ENCODE measurements at regions of chr3 and their contacts with region 1.

Region 1: GRCh38 chr3:190701096-190701532 is 161.4 kb downstream of the GMNC start:
- DNase-seq: peak; percentile 87
- H3K4me3 ChIP-seq: no peak overlapping the region
- H3K27ac ChIP-seq: peak overlapping the region; percentile 11
- H3K4me1 ChIP-seq: peaks cover 45% of the 10 kb centered on the region
- H3K27me3 ChIP-seq: no peaks in the 10 kb centered on the region
- CTCF ChIP-seq: peak; percentile 88

Region 2: DNA sequence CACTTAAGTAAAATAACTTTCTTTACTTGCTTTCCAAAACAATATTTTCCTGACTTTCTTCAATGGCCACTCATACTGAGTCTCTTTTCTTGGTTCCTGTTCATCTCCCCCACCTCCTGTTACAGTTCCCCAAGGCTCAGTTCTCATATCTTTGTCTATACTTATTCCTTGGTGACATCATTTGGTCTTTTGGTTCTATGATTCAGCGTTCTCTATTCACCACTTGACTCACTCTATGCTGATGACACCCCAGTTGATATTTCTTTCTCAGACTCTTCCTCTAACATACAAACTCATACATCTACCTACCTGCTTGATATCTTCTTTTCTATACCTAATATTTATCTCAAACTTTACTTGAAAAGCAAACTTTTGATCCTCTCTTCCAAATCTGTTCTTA is 495.4 kb before region 1 on chr3:
- CTCF ChIA-PET with region 1: no interaction called
- POLR2A ChIA-PET with region 1: no interaction called
- intact Hi-C with region 1: loop called (anchors 10 kb)
- DNase-seq: no peak
- H3K4me3 ChIP-seq: no peak overlapping the region
- H3K27ac ChIP-seq: no peak overlapping the region
- H3K4me1 ChIP-seq: no peaks in the 10 kb centered on the region
- H3K27me3 ChIP-seq: no peaks in the 10 kb centered on the region
- CTCF ChIP-seq: no peak

Region 3: GRCh38 chr3:190526787-190527762 is 174.0 kb before region 1 on chr3:
- CTCF ChIA-PET with region 1: interaction called, 5 read pairs
- POLR2A ChIA-PET with region 1: no interaction called
- intact Hi-C with region 1: loop called (anchors 1 kb)
- DNase-seq: peak; percentile 68
- H3K4me3 ChIP-seq: peak overlapping the region; percentile 16
- H3K27ac ChIP-seq: peak overlapping the region; percentile 83
- H3K4me1 ChIP-seq: peaks cover 88% of the 10 kb centered on the region
- H3K27me3 ChIP-seq: no peaks in the 10 kb centered on the region
- CTCF ChIP-seq: no peak

Region 4: DNA sequence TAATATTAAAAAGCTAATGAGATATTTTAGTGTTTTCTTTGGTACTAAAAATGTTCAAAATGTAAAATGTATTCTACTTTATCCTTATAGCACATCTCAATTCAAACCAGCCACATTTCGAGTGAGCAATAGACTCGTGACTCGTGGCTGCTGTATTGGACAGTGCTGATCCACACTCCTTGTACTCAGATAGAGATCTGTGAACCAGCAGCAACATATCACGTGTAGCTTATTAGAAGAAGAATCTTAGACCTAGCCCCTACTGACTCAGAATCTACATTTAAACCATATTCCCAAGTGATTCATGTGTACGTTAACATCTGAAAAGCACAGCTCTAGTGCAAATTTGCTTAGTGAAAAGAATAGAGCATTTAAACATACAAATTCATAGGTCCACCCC is 56.4 kb before region 1 on chr3:
- CTCF ChIA-PET with region 1: no interaction called
- POLR2A ChIA-PET with region 1: no interaction called
- intact Hi-C with region 1: no loop called
- DNase-seq: peak; percentile 35
- H3K4me3 ChIP-seq: no peak overlapping the region
- H3K27ac ChIP-seq: no peak overlapping the region
- H3K4me1 ChIP-seq: no peaks in the 10 kb centered on the region
- H3K27me3 ChIP-seq: no peaks in the 10 kb centered on the region
- CTCF ChIP-seq: no peak

Region 5: DNA sequence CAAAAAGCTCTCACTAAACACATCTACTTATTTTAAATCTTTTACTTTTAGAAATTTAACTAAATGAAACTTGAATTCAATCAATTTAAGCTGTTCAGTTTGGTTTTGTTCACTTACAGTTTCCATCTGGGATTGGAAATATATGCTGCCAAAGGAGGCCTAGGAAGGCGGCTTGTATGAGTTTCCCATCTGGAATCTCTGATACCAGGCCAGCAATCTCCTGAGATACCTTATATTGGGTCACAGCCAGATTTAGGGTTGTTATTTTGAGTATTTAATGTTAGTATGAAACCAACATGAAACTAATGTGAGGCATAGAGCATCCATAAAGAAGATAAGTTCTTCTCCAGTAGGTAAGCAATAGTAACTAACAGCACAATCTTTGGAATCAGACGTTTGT is 66.7 kb after region 1 on chr3:
- CTCF ChIA-PET with region 1: no interaction called
- POLR2A ChIA-PET with region 1: no interaction called
- intact Hi-C with region 1: no loop called
- DNase-seq: no peak
- H3K4me3 ChIP-seq: no peak overlapping the region
- H3K27ac ChIP-seq: no peak overlapping the region
- H3K4me1 ChIP-seq: peaks cover 13% of the 10 kb centered on the region
- H3K27me3 ChIP-seq: no peaks in the 10 kb centered on the region
- CTCF ChIP-seq: no peak

Region 6: GRCh38 chr3:190811775-190812480 is 110.8 kb after region 1 on chr3:
- CTCF ChIA-PET with region 1: no interaction called
- POLR2A ChIA-PET with region 1: no interaction called
- intact Hi-C with region 1: loop called (anchors 1 kb)
- DNase-seq: peak; percentile 91
- H3K4me3 ChIP-seq: peak overlapping the region; percentile 44
- H3K27ac ChIP-seq: peak overlapping the region; percentile 49
- H3K4me1 ChIP-seq: peaks cover 6% of the 10 kb centered on the region
- H3K27me3 ChIP-seq: no peaks in the 10 kb centered on the region
- CTCF ChIP-seq: peak; percentile 82

Region 7: DNA sequence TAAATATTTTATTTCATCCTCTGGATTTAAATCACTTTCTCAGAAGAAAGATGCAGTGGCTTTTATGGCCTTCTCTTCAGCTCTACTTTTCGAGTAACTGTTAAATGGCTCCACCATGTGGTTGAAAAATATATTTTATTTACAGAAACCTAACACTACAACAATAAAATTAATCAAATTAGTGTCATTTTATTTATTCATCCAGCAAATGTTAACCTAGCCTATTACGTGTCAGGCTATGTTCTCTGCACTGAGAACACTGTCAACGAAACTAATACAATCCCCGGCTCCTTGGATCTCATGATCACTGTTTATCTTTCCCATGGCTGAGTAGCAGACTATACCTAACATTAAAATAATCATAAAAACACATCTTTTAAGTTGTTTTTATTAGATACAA is 349.9 kb after region 1 on chr3:
- CTCF ChIA-PET with region 1: interaction called, 21 read pairs
- POLR2A ChIA-PET with region 1: no interaction called
- intact Hi-C with region 1: loop called (anchors 2 kb)
- DNase-seq: peak; percentile 82
- H3K4me3 ChIP-seq: no peak overlapping the region
- H3K27ac ChIP-seq: peak overlapping the region; percentile 77
- H3K4me1 ChIP-seq: peaks cover 28% of the 10 kb centered on the region
- H3K27me3 ChIP-seq: no peaks in the 10 kb centered on the region
- CTCF ChIP-seq: peak; percentile 66

Measured in A673 (cell line).